Activated CD4-positive, alpha-beta memory T cell treated with anti-CD3 and anti-CD28 coated beads for 36 hours (primary cell): ENCODE measurements at regions of chr1 and their contacts with region 1.

Region 1: GRCh38 chr1:154263465-154264332 is 8.7 kb upstream of the HAX1 start:
- DNase-seq: no peak
- H3K4me3 Mint-ChIP-seq: no peak overlapping the region
- H3K27ac Mint-ChIP-seq: peak overlapping the region; percentile 79
- H3K4me1 Mint-ChIP-seq: peaks cover 38% of the 10 kb centered on the region
- H3K27me3 Mint-ChIP-seq: no peaks in the 10 kb centered on the region

Region 2: DNA sequence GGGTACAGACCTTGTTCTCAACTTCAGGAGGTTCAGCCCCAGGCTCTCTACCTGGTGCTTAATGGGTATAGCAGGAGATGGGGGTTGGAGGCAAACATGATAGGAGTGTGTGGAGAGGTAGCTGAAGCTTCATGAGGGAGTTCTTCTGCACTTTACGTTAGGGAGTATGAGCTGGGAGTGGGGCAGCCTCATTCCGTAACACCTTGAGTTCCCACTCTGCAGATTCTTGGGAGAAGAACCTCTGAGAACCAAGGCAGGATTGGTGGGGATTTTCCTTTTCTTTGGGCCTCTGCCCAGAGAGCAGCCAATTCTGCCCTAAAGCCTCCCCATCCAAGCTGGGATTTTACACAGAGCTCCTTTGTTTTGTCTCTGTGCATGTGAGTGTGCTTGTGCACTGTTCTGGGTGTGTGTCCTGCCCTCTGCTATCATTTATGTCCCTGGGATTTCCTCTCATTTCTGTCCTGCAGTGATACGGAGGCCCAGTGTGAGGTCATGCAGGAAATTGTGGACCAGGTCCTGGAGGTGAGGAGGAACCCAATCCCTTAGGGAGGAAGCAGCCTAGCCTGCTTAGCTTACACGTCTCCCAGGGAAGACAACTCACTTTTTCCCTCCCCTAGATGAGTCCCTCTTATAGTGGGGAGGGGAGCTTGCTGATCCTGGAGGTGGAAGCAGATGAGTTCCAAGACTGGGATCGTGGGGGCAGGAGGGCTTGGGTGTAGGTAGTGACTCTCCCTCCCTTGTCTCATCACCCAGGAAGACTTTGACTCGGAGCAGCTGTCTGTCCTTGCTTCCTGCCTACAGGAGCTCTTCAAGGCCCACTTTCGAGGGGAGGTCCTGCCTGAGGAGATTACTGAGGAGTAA is 500.1 kb before region 1 on chr1:
- CTCF ChIA-PET with region 1: no interaction called
- POLR2A ChIA-PET with region 1: no interaction called
- intact Hi-C with region 1: no loop called
- DNase-seq: no peak
- H3K4me3 Mint-ChIP-seq: no peak overlapping the region
- H3K27ac Mint-ChIP-seq: no peak overlapping the region
- H3K4me1 Mint-ChIP-seq: no peaks in the 10 kb centered on the region
- H3K27me3 Mint-ChIP-seq: no peaks in the 10 kb centered on the region

Region 3: GRCh38 chr1:153866045-153866850 is 397.5 kb before region 1 on chr1:
- CTCF ChIA-PET with region 1: no interaction called
- POLR2A ChIA-PET with region 1: no interaction called
- intact Hi-C with region 1: no loop called
- DNase-seq: no peak
- H3K4me3 Mint-ChIP-seq: no peak overlapping the region
- H3K27ac Mint-ChIP-seq: no peak overlapping the region
- H3K4me1 Mint-ChIP-seq: peaks cover 30% of the 10 kb centered on the region
- H3K27me3 Mint-ChIP-seq: no peaks in the 10 kb centered on the region

Region 4: GRCh38 chr1:154198756-154199562 is 64.7 kb before region 1 on chr1:
- CTCF ChIA-PET with region 1: interaction called, 10 read pairs
- POLR2A ChIA-PET with region 1: interaction called, 4 read pairs
- intact Hi-C with region 1: no loop called
- DNase-seq: peak; percentile 47
- H3K4me3 Mint-ChIP-seq: no peak overlapping the region
- H3K27ac Mint-ChIP-seq: no peak overlapping the region
- H3K4me1 Mint-ChIP-seq: no peaks in the 10 kb centered on the region
- H3K27me3 Mint-ChIP-seq: peaks cover under 1% of the 10 kb centered on the region

Region 5: DNA sequence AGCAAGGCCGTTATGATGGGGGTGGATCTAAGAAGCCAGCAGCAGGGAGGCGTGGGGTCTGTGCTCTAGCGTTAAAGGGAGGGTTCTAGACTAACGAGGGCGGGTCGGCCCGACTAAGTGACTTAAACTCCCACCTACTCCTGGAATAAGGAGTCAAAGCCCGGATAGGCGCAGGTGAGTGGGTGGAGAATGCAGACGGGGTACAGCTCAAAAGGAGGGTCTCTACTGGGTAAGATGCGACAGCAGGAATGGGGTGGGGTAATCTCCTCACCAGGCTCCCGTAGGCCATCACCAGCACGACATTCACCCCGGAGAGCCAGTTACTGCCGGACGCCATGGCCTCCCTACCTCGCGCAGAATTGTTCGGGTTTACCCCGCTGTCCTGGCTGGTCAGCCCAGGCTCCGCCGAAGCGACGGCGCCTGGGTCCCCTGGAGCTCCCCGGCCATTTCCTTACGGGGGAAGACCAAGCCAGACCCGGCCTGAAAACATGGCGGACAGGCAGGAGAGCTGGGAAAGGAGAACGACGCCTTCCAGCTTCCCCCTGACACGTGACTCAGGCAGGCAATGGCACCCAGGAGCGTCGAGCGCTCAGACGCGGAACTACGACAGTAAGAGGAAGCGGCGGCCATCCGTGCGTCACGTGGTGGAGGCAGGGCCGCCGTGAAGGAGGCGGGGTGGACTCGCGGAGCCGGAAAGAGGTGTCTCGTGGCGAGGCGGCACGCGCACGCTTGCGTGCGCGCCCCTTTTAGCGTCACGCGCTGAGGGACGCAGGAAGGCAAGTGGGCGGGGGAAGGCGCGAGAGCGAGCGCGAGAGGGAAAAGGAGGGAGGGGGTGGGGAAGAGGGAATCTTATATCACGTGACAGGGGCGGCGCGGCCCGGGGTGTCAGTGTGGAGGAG is 43.4 kb before region 1 on chr1 and contains the start of gene UBAP2L:
- CTCF ChIA-PET with region 1: interaction called, 3 read pairs
- POLR2A ChIA-PET with region 1: interaction called, 4 read pairs
- intact Hi-C with region 1: loop called (anchors 2 kb)
- DNase-seq: peak; percentile 99
- H3K4me3 Mint-ChIP-seq: peak within 1 kb of the TSS; percentile 90
- H3K27ac Mint-ChIP-seq: peak within 1 kb of the TSS; percentile 94
- H3K4me1 Mint-ChIP-seq: peaks cover 68% of the 10 kb centered on the region
- H3K27me3 Mint-ChIP-seq: peaks cover 2% of the 10 kb centered on the region
- total RNA-seq, gene UBAP2L: 180 to 183 TPM

Region 6: GRCh38 chr1:154237435-154237834 is 26.3 kb before region 1 on chr1:
- CTCF ChIA-PET with region 1: no interaction called
- POLR2A ChIA-PET with region 1: no interaction called
- intact Hi-C with region 1: no loop called
- DNase-seq: no peak
- H3K4me3 Mint-ChIP-seq: no peak overlapping the region
- H3K27ac Mint-ChIP-seq: peak overlapping the region; percentile 0
- H3K4me1 Mint-ChIP-seq: peaks cover 25% of the 10 kb centered on the region
- H3K27me3 Mint-ChIP-seq: no peaks in the 10 kb centered on the region